Left cardiac atrium (tissue), 4 donors: ENCODE measurements at regions of chr7 and their contacts with region 1.

Region 1: GRCh38 chr7:2116989-2117591 is 115.7 kb downstream of the MAD1L1 start:
- DNase-seq: peak; percentile 76
- ATAC-seq: peak; percentile 68 to 80

Region 2: GRCh38 chr7:2157468-2158279 is 40.6 kb after region 1 on chr7:
- intact Hi-C with region 1: loop called in 1 of 2 experiments (anchors 5 kb)
- DNase-seq: peak; percentile 64
- ATAC-seq: peak; percentile 80 to 93

Region 3: DNA sequence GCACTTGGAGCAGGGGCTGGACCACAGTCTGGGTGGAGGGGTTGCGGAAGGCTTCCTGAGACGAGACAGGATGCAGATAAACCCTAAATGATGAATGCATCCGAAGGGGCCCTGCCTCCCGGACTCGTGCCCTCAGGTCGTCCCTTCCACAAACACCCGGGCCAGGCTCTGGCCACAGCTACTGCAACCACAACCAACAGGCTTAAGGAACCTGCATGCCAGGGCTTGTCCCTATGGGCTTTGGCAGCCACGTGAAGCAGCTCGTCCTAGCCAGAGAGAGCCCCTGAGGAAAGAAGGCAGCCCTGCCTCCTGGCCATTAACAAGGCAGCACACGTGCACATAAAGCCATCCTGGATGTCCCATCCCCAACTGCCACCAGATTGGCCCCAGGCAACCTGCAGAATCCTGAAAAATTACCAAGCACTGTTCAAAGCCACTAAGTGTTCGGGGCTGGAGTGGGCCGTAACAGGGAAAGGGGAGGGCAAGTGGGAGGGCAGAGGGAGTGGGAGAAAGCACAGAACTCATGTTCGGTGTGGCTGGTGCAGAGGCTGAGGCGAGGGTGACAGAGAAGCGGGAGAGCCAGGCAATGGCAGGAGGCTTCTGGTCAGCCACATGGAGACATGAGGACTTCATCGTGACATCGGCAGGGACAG is 53.0 kb after region 1 on chr7:
- intact Hi-C with region 1: no loop called
- DNase-seq: no peak
- ATAC-seq: no peak

Region 4: DNA sequence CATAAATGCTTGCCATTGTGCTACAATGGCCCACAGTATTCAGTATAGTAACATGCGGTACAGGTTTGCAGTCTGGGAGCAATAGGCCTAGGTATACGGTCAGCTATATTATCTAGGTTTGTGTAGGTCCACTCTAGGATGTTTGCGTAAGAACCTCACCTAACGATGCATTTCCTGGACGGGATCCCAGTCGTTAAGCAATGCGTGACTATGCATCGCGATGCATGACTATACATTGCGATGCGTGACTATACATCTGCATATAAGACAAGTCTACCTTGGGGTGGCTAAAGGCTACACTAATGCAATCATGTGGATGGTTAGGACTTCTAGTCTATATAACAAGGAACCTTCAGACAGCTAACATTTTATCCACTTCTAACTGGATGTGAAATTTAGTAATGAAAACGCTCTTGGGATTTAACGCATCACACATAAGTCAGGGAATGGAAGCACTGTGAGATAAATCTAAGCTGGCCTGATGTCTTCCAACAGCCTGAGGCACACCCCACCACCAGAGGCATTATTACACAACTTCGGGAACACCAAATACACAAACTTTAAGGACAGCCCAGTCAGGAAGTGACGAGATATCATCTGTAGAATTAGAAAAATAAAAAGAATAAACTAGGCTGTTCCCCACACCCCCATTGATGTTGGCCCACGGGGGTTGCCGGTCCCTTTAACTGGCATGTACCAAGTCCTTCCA is 717.8 kb after region 1 on chr7:
- intact Hi-C with region 1: no loop called
- DNase-seq: no peak
- ATAC-seq: no peak